ENCODE measurements at regions of chr15 and their contacts with region 1.

Region 1: DNA sequence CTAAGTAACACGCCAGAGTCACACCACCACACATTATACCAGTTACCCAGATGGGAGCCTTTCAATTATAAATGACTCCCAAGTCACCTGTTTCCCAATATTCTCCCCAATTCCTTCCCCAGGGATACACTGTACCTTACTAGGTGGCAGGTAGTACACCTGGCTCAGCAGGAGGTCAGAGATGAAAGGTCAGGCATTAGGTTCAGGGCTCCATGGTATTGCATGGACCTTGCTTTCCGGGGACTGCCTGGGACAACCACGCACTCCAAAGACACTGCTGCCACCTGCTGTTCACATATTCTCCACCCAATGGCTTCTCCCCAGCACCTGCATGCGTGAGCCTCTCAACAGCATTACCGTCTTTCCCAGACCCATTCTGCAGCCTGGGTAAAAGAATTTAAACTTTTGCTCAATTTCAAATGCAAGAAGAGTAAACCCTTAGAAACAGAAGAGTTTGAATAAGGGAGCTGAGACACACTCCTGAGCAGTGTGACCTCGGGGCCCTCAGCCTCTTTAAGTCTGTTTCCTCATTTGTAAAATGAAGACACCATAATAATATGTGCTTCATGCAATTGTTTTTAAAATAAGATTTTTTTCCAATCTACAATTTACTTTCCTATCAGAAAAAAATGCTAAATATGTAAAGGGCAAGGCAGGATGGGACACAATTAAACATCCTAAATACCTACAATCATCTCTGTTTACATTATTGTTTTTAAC is 28.0 kb upstream of the LACTB start:
- DNase-seq: peak; percentile 81 to 94
- H3K4me3 ChIP-seq: no peak overlapping the region
- CTCF ChIP-seq: peak in 1 of 3 donors; percentile 50
- POLR2A ChIP-seq: no peak

Region 2: DNA sequence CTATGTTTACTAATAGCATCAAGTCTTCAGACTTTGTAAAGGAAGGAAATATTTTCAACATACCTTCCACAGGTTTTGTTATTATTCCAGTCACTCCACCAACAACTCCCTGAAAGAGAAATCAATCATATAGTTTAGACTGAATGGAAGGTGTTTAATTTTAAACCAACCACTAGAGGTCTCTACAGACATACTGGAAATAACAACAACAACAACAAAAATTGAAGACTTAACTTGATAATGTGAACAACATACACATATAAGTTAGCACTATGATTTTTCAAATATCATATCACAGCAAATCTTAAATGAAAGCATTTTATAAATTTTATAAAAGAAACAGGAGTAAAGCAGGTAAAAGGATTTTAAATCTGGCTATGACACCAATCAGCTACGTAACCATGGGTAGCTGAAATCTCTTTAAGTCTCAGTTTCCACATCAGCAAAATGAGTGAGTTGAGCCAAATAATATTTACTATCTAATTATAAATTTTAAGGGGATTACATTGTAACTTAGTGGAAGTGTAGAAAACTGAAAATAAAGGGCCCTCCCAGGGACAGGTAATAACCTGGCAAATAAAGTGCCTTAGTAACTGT is 1221.6 kb before region 1 on chr15:
- intact Hi-C with region 1: loop called (anchors 10 kb)
- DNase-seq: no peak
- H3K4me3 ChIP-seq: no peak overlapping the region
- CTCF ChIP-seq: no peak
- POLR2A ChIP-seq: no peak

Region 3: GRCh38 chr15:62782039-62782791 is 311.4 kb before region 1 on chr15:
- intact Hi-C with region 1: loop called (anchors 10 kb)
- DNase-seq: peak in 1 of 2 donors; percentile 59
- H3K4me3 ChIP-seq: no peak overlapping the region
- CTCF ChIP-seq: no peak
- POLR2A ChIP-seq: no peak

Region 4: GRCh38 chr15:62847900-62848489 is 245.7 kb before region 1 on chr15:
- intact Hi-C with region 1: loop called (anchors 10 kb)
- DNase-seq: peak in 1 of 2 donors; percentile 90
- H3K4me3 ChIP-seq: no peak overlapping the region
- CTCF ChIP-seq: no peak
- POLR2A ChIP-seq: no peak

Measured in lower leg skin (tissue), 4 donors.